ENCODE measurements at regions of chr3 and their contacts with region 1.

Region 1: DNA sequence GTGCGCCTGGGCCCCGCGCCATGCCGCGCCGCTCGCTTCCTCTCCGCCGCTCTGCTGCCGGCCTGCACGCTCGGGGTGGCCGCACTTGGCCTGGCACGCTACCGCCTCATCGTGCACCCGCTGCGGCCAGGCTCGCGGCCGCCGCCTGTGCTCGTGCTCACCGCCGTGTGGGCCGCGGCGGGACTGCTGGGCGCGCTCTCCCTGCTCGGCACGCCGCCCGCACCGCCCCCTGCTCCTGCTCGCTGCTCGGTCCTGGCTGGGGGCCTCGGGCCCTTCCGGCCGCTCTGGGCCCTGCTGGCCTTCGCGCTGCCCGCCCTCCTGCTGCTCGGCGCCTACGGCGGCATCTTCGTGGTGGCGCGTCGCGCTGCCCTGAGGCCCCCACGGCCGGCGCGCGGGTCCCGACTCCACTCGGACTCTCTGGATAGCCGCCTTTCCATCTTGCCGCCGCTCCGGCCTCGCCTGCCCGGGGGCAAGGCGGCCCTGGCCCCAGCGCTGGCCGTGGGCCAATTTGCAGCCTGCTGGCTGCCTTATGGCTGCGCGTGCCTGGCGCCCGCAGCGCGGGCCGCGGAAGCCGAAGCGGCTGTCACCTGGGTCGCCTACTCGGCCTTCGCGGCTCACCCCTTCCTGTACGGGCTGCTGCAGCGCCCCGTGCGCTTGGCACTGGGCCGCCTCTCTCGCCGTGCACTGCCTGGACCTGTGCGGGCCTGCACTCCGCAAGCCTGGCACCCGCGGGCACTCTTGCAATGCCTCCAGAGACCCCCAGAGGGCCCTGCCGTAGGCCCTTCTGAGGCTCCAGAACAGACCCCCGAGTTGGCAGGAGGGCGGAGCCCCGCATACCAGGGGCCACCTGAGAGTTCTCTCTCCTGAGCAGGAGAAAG is 951 bp downstream of the GPR62 start:
- DNase-seq: peak in 7 of 9 donors; percentile 26 to 40 (median 34)
- ATAC-seq: peak; percentile 77
- H3K4me3 ChIP-seq: peak overlapping the region; percentile 44
- H3K4me3 Mint-ChIP-seq: peak overlapping the region; percentile 12 to 80 (median 59)
- H3K27ac ChIP-seq: no peak overlapping the region
- H3K27ac Mint-ChIP-seq: no peak overlapping the region
- H3K4me1 ChIP-seq: peaks cover 0 to 7% of the 10 kb centered on the region in 2 donors
- H3K4me1 Mint-ChIP-seq: peaks cover 0 to 6% (median 4%) of the 10 kb centered on the region in 7 donors
- H3K27me3 ChIP-seq: peaks cover 3 to 4% of the 10 kb centered on the region in 2 donors
- H3K27me3 Mint-ChIP-seq: peaks cover 16 to 47% (median 21%) of the 10 kb centered on the region in 5 donors

Region 2: GRCh38 chr3:51974963-51975851 is 19.1 kb after region 1 on chr3 and contains the start of gene ABHD14A:
- CTCF ChIA-PET with region 1: interaction called, 6 read pairs
- POLR2A ChIA-PET with region 1: interaction called, 4 read pairs
- intact Hi-C with region 1: loop called in 1 of 2 experiments (anchors 1 kb)
- DNase-seq: peak; percentile 68 to 85 (median 73)
- ATAC-seq: peak; percentile 80
- H3K4me3 ChIP-seq: peak within 1 kb of the TSS; percentile 82
- H3K4me3 Mint-ChIP-seq: peak within 1 kb of the TSS; percentile 83 to 100 (median 94)
- H3K27ac ChIP-seq: peak within 1 kb of the TSS; percentile 77
- H3K27ac Mint-ChIP-seq: peak within 1 kb of the TSS; percentile 88 to 97 (median 92)
- H3K4me1 ChIP-seq: peaks cover 9 to 21% of the 10 kb centered on the region in 2 donors
- H3K4me1 Mint-ChIP-seq: peaks cover 26 to 53% (median 32%) of the 10 kb centered on the region in 7 donors
- H3K27me3 ChIP-seq: no peaks in the 10 kb centered on the region
- H3K27me3 Mint-ChIP-seq: no peaks in the 10 kb centered on the region
- total RNA-seq, gene ABHD14A: 9.9 to 23.7 (median 14.7) TPM

Region 3: GRCh38 chr3:52313774-52314188 is 357.6 kb after region 1 on chr3:
- CTCF ChIA-PET with region 1: no interaction called
- POLR2A ChIA-PET with region 1: no interaction called
- intact Hi-C with region 1: no loop called
- DNase-seq: no peak
- ATAC-seq: peak; percentile 79
- H3K4me3 ChIP-seq: no peak overlapping the region
- H3K4me3 Mint-ChIP-seq: no peak overlapping the region
- H3K27ac ChIP-seq: no peak overlapping the region
- H3K27ac Mint-ChIP-seq: peak overlapping the region in 1 of 9 donors; percentile 36
- H3K4me1 ChIP-seq: peaks cover 11 to 15% of the 10 kb centered on the region in 2 donors
- H3K4me1 Mint-ChIP-seq: peaks cover 0 to 29% (median 24%) of the 10 kb centered on the region in 7 donors
- H3K27me3 ChIP-seq: no peaks in the 10 kb centered on the region
- H3K27me3 Mint-ChIP-seq: no peaks in the 10 kb centered on the region